Esophagus squamous epithelium (tissue), 5 donors: ENCODE measurements at regions of chr18 and their contacts with region 1.

Region 1: GRCh38 chr18:76982841-76983587 is 149.6 kb downstream of the MBP start:
- DNase-seq: peak; percentile 30
- H3K4me3 ChIP-seq: no peak overlapping the region
- H3K27ac ChIP-seq: no peak overlapping the region
- H3K4me1 ChIP-seq: peaks cover 0 to 10% (median 0%) of the 10 kb centered on the region in 3 donors
- H3K27me3 ChIP-seq: no peaks in the 10 kb centered on the region
- CTCF ChIP-seq: peak; percentile 87 to 95 (median 92)
- POLR2A ChIP-seq: no peak

Region 2: GRCh38 chr18:76803814-76804213 is 179.2 kb before region 1 on chr18:
- intact Hi-C with region 1: loop called (anchors 10 kb)
- DNase-seq: no peak
- H3K4me3 ChIP-seq: no peak overlapping the region
- H3K27ac ChIP-seq: no peak overlapping the region
- H3K4me1 ChIP-seq: peaks cover 0 to 27% (median 14%) of the 10 kb centered on the region in 3 donors
- H3K27me3 ChIP-seq: peaks cover 0 to 10% (median 0%) of the 10 kb centered on the region in 4 donors
- CTCF ChIP-seq: peak; percentile 56 to 83 (median 67)
- POLR2A ChIP-seq: no peak